ENCODE measurements at regions of chr14 and their contacts with region 1.

Region 1: GRCh38 chr14:102314242-102315011 is 5.1 kb upstream of the ZNF839 start:
- DNase-seq: peak; percentile 95
- H3K4me3 ChIP-seq: peak overlapping the region; percentile 49 to 61
- H3K27ac ChIP-seq: peak overlapping the region; percentile 49 to 66
- H3K4me1 ChIP-seq: peaks cover 21% of the 10 kb centered on the region
- H3K27me3 ChIP-seq: no peaks in the 10 kb centered on the region
- CTCF ChIP-seq: peak; percentile 89 to 95 (median 90)
- POLR2A ChIP-seq: no peak

Region 2: DNA sequence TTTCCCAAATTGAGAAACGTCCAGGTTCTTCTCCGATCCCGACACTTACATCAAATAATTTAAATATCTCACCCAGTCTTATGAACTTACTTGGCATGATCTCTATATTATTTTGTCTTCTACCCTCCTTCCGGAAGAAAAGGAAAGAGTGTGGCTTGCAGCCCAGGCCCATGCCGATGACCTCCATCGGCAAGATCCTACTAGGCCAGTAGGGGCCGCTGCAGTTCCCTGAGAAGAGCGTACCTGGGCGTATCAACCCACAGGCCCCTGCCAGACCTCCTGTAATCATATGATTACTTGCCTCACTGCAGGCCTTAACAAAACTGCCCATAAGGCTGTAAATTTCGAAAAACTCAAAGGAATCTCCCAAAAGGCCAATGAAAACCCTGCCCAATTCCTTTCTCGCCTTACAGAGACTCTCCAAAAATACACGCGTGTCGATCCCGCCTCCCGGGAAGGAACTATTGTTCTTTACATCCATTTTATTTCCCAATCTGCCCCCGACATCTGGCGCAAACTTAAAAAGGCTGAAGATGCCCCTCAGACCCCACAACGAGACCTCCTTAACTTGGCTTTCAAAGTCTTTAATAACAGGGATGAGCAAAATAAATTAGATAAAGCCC is 79.0 kb before region 1 on chr14:
- intact Hi-C with region 1: loop called (anchors 5 kb)
- DNase-seq: peak; percentile 94
- H3K4me3 ChIP-seq: peak overlapping the region; percentile 22 to 33
- H3K27ac ChIP-seq: peak overlapping the region; percentile 71 to 83
- H3K4me1 ChIP-seq: peaks cover 7% of the 10 kb centered on the region
- H3K27me3 ChIP-seq: no peaks in the 10 kb centered on the region
- CTCF ChIP-seq: peak; percentile 78 to 90 (median 86)
- POLR2A ChIP-seq: no peak